Heart left ventricle (tissue), 16 donors: ENCODE measurements at regions of chr1 and their contacts with region 1.

Region 1: GRCh38 chr1:109314795-109315194 is 8.0 kb upstream of the MYBPHL start:
- DNase-seq: no peak
- ATAC-seq: no peak
- H3K4me3 ChIP-seq: no peak overlapping the region
- H3K27ac ChIP-seq: no peak overlapping the region
- H3K4me1 ChIP-seq: peaks cover 0 to 6% (median 0%) of the 10 kb centered on the region in 12 donors
- H3K27me3 ChIP-seq: no peaks in the 10 kb centered on the region
- CTCF ChIP-seq: no peak
- POLR2A ChIP-seq: no peak

Region 2: DNA sequence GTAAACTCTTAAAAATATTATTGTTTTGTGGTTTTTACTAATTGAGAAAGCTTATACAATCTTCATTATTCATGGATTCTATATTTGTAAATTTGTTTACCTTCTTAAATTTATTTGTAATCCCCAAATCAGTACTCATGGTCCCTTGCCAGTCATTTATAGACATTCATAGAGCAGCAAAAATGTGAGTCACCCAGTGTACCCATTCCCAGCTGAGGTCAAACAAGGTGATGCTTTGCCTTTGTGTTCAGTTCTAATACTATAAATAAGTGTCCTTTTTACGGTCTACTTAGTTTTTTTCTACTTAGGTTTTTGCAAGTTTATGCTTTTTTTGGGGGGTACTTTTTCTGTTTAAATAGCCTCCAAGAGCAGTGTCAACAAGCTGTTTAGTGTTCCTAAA is 46.9 kb after region 1 on chr1:
- intact Hi-C with region 1: loop called in 1 of 10 experiments (anchors 5 kb)
- DNase-seq: no peak
- ATAC-seq: peak in 1 of 4 donors; percentile 75
- H3K4me3 ChIP-seq: no peak overlapping the region
- H3K27ac ChIP-seq: peak overlapping the region in 2 of 12 donors; percentile 0 to 47
- H3K4me1 ChIP-seq: peaks cover 0 to 33% (median 20%) of the 10 kb centered on the region in 12 donors
- H3K27me3 ChIP-seq: no peaks in the 10 kb centered on the region
- CTCF ChIP-seq: no peak
- POLR2A ChIP-seq: no peak